ENCODE measurements at regions of chr2 and their contacts with region 1.

Region 1: DNA sequence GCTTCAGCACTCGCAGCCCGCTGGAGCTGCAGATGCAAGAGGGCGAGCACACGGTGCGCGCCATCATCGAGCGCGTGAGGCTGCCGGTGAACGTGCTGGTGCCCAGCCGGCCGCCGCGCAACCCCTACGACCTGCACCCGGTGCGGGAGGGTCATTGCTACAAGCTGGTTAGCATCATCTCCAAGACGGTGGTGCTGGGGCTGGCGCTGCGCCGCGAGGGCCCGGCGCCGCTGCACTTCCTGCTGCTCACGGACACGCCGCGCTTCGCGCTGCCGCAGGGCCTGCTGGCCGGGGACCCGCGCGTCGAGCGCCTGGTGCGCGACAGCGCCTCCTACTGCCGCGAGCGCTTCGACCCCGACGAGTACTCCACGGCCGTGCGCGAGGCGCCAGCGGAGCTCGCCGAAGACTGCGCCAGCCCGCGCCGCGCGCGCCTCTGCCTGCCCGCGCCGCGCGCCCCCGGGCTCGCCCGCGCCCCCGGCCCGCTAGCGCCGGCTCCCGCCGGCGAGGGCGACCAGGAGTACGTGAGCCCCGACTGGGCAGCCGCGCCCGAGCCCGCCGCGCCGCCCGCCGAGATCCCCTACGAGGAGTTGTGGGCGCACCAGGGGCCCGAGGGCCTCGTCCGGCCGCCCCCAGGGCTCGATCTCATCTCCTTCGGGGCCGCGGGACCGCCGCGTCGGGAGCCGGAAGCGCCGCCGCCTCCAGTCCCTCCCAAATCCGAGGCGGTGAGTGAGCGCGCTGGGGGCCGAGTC is 11.8 kb downstream of the GAREM2 start:
- DNase-seq: peak; percentile 88
- H3K4me3 ChIP-seq: peak overlapping the region; percentile 46 to 65 (median 52)
- H3K27ac ChIP-seq: peak overlapping the region; percentile 52 to 67 (median 63)
- H3K4me1 ChIP-seq: peaks cover 4 to 12% (median 10%) of the 10 kb centered on the region in 4 donors
- H3K27me3 ChIP-seq: peaks cover 7% of the 10 kb centered on the region
- CTCF ChIP-seq: peak in 4 of 5 experiments; percentile 39 to 67 (median 56)
- EP300 ChIP-seq: no peak
- POLR2A ChIP-seq: no peak

Region 2: GRCh38 chr2:25018681-25019080 is 1166.0 kb before region 1 on chr2:
- in situ Hi-C with region 1: no loop called
- intact Hi-C with region 1: loop called (anchors 5 kb)
- DNase-seq: no peak
- H3K4me3 ChIP-seq: no peak overlapping the region
- H3K27ac ChIP-seq: no peak overlapping the region
- H3K4me1 ChIP-seq: no peaks in the 10 kb centered on the region
- H3K27me3 ChIP-seq: peaks cover 4% of the 10 kb centered on the region
- CTCF ChIP-seq: no peak
- EP300 ChIP-seq: no peak
- POLR2A ChIP-seq: no peak

Region 3: DNA sequence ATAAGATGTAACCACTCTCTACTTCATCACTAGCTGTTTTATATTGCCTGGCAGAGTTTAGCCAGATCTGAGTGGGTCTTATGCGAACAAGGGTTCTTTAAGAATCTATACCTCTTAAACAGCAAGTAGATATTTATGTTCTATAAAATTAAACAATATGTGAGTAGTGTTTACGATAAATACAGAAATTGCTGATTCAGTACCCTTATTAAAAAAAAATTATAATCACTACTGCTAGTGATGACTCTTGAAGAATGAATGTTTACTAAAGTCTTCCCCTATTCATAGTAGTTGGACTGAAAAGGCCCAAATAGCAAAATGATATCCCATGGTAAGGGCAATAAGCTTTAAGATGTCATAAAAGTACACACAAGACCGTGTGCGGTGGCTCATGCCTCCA is 412.7 kb before region 1 on chr2:
- in situ Hi-C with region 1: no loop called
- intact Hi-C with region 1: no loop called
- DNase-seq: no peak
- H3K4me3 ChIP-seq: no peak overlapping the region
- H3K27ac ChIP-seq: no peak overlapping the region
- H3K4me1 ChIP-seq: no peaks in the 10 kb centered on the region
- H3K27me3 ChIP-seq: no peaks in the 10 kb centered on the region
- CTCF ChIP-seq: no peak
- EP300 ChIP-seq: no peak
- POLR2A ChIP-seq: no peak

Measured in transverse colon (tissue), 4 donors.